Mammary epithelial cell (primary cell): ENCODE measurements at regions of chr1 and their contacts with region 1.

Region 1: DNA sequence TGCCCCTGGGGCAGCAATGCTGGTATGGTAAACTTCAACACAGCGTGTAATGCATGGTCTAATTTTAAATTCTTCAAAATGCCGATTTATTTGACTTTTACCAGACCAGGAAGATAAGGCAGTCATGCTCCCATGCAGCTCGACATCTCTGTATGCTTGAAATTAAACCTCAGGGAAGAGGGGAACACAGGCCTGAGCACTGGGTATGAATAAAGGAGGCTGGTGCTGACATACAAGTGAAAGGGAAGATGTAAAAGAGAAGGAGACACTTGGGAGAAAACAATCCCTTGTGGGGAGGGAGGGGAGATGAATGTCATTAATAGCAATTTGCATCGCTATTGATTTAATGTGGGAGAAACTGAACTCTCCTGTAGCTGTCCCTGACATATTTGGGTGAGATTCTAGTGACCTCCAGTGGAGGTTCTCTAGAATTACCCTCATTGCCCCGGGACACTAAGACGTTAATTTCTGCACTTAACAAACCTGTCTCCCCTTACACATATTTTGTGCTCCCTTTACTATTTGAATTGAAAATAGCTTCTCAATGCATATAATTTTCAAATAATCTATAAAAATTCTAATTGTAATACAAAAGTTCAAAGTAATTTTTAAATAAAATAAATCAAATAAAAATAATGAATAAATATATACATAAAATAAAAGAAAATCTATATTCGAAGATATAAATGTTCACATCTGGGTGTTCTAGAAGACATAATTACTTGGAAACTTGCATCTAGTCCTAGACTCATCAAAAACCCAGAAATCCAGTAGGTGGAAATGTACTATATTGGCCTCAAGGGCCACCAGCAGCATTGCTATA is 283.1 kb downstream of the LMX1A start:
- DNase-seq: peak; percentile 35
- H3K4me3 ChIP-seq: no peak overlapping the region
- H3K27ac ChIP-seq: no peak overlapping the region
- H3K4me1 ChIP-seq: no peaks in the 10 kb centered on the region
- H3K27me3 ChIP-seq: peaks cover 4% of the 10 kb centered on the region
- CTCF ChIP-seq: peak; percentile 67 to 80

Region 2: GRCh38 chr1:163395790-163396189 is 1677.6 kb before region 1 on chr1:
- CTCF ChIA-PET with region 1: no interaction called
- dilution Hi-C with region 1: no loop called
- in situ Hi-C with region 1: loop called (anchors 25 kb)
- intact Hi-C with region 1: no loop called
- DNase-seq: no peak
- H3K4me3 ChIP-seq: no peak overlapping the region
- H3K27ac ChIP-seq: no peak overlapping the region
- H3K4me1 ChIP-seq: no peaks in the 10 kb centered on the region
- H3K27me3 ChIP-seq: no peaks in the 10 kb centered on the region
- CTCF ChIP-seq: no peak

Region 3: DNA sequence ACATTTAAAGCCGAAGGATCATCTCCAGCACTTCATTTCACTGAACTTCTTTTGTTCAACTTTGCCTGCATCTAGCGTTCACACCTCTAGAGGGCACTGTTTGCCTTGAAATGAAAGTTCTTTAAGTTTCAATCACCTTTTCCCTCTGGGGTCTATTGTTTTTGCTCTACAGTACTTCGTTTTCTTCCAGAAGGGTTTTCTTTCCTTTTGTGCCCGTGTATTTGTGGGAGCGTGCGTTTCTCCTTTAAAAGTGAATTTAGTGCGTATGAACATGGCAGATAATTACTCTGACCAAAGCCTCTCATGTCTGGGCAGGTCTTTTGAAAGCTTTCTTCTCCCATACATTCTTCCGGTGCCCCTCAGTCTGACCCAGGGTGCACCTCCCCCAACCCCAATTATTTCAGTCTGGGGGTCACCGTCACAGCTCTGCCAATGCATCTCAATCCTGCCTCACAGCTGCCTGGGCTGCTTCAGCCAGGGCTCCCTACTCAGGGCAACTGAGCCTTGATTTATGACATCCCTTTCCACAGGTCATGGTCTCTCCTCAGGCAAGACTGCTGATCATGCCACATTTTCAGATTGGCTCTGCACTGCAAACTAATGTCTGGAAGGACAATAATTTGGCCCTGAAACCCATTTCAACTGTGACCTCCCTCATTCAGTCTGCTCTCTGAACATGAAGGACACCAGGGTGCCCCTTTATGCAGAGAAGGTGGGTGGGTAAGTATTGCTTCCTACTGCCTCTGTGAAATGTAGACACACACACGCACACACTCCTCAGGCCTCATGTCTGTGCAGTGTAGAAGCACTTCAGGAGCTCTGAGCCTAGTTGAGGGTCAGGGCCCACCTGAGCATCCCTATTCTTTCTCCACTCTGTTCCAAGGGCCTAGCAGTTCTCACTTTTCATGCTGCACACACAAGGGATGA is 1663.1 kb before region 1 on chr1:
- CTCF ChIA-PET with region 1: no interaction called
- dilution Hi-C with region 1: no loop called
- in situ Hi-C with region 1: loop called in 1 of 2 experiments (anchors 25 kb)
- intact Hi-C with region 1: loop called (anchors 1 kb)
- DNase-seq: peak; percentile 26
- H3K4me3 ChIP-seq: no peak overlapping the region
- H3K27ac ChIP-seq: no peak overlapping the region
- H3K4me1 ChIP-seq: no peaks in the 10 kb centered on the region
- H3K27me3 ChIP-seq: no peaks in the 10 kb centered on the region
- CTCF ChIP-seq: peak; percentile 79 to 87

Region 4: DNA sequence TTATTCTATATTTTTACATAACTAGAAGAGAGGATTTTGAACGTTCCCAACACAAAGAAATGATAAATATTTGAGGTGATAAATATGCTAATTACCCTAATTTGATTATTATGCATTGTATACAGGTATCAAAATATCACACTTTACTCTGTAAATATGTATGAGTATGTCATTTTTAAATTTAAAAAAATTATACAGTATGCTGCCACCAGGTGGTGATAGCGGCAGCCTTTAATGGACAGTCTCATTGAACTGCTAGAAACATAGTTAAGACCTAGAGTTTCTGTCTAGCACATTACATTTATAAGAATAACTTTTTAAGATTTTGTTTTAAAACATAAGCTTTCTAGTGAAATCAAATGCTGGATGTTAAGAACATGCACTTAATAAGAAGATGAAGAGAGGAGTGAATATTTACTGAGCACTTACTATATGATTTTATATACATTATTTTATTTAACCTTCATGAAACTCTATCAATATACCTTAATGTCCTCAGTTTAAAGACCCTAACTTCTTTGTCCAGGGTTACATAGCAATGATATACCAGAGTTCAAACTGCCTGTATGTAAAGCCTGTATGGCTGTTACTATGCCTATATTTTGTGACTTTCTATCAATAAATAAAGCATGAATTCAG is 1544.6 kb before region 1 on chr1:
- CTCF ChIA-PET with region 1: no interaction called
- dilution Hi-C with region 1: no loop called
- in situ Hi-C with region 1: loop called (anchors 10 to 25 kb)
- intact Hi-C with region 1: loop called (anchors 2 kb)
- DNase-seq: peak; percentile 5
- H3K4me3 ChIP-seq: no peak overlapping the region
- H3K27ac ChIP-seq: no peak overlapping the region
- H3K4me1 ChIP-seq: no peaks in the 10 kb centered on the region
- H3K27me3 ChIP-seq: no peaks in the 10 kb centered on the region
- CTCF ChIP-seq: peak; percentile 51 to 62

Region 5: GRCh38 chr1:163561580-163562295 is 1511.7 kb before region 1 on chr1:
- CTCF ChIA-PET with region 1: no interaction called
- dilution Hi-C with region 1: no loop called
- in situ Hi-C with region 1: no loop called
- intact Hi-C with region 1: loop called (anchors 1 kb)
- DNase-seq: no peak
- H3K4me3 ChIP-seq: no peak overlapping the region
- H3K27ac ChIP-seq: no peak overlapping the region
- H3K4me1 ChIP-seq: no peaks in the 10 kb centered on the region
- H3K27me3 ChIP-seq: no peaks in the 10 kb centered on the region
- CTCF ChIP-seq: peak; percentile 5 to 35

Region 6: GRCh38 chr1:163820766-163821165 is 1252.6 kb before region 1 on chr1:
- CTCF ChIA-PET with region 1: no interaction called
- dilution Hi-C with region 1: no loop called
- in situ Hi-C with region 1: no loop called
- intact Hi-C with region 1: loop called (anchors 10 kb)
- DNase-seq: no peak
- H3K4me3 ChIP-seq: no peak overlapping the region
- H3K27ac ChIP-seq: no peak overlapping the region
- H3K4me1 ChIP-seq: peaks cover 11% of the 10 kb centered on the region
- H3K27me3 ChIP-seq: no peaks in the 10 kb centered on the region
- CTCF ChIP-seq: peak; percentile 3 to 22

Region 7: GRCh38 chr1:164617377-164618201 is 455.8 kb before region 1 on chr1:
- CTCF ChIA-PET with region 1: no interaction called
- dilution Hi-C with region 1: no loop called
- in situ Hi-C with region 1: no loop called
- intact Hi-C with region 1: loop called (anchors 5 kb)
- DNase-seq: peak; percentile 18
- H3K4me3 ChIP-seq: no peak overlapping the region
- H3K27ac ChIP-seq: no peak overlapping the region
- H3K4me1 ChIP-seq: peaks cover 11% of the 10 kb centered on the region
- H3K27me3 ChIP-seq: no peaks in the 10 kb centered on the region
- CTCF ChIP-seq: peak; percentile 65 to 73

Region 8: GRCh38 chr1:164836614-164837018 is 236.8 kb before region 1 on chr1:
- CTCF ChIA-PET with region 1: no interaction called
- dilution Hi-C with region 1: no loop called
- in situ Hi-C with region 1: no loop called
- intact Hi-C with region 1: no loop called
- DNase-seq: no peak
- H3K4me3 ChIP-seq: no peak overlapping the region
- H3K27ac ChIP-seq: no peak overlapping the region
- H3K4me1 ChIP-seq: no peaks in the 10 kb centered on the region
- H3K27me3 ChIP-seq: no peaks in the 10 kb centered on the region
- CTCF ChIP-seq: no peak

Region 9: GRCh38 chr1:165056914-165057313 is 16.5 kb before region 1 on chr1:
- CTCF ChIA-PET with region 1: no interaction called
- dilution Hi-C with region 1: no loop called
- in situ Hi-C with region 1: no loop called
- intact Hi-C with region 1: no loop called
- DNase-seq: no peak
- H3K4me3 ChIP-seq: no peak overlapping the region
- H3K27ac ChIP-seq: no peak overlapping the region
- H3K4me1 ChIP-seq: no peaks in the 10 kb centered on the region
- H3K27me3 ChIP-seq: no peaks in the 10 kb centered on the region
- CTCF ChIP-seq: no peak